ENCODE measurements at regions of chr2 and their contacts with region 1.

Region 1: GRCh38 chr2:216539714-216540241 is 41.1 kb downstream of the RPL37A start:
- DNase-seq: peak; percentile 75
- H3K4me3 ChIP-seq: no peak overlapping the region
- H3K27ac ChIP-seq: peak overlapping the region in 3 of 4 donors; percentile 15 to 34 (median 22)
- H3K4me1 ChIP-seq: peaks cover 8 to 20% (median 16%) of the 10 kb centered on the region in 4 donors
- H3K27me3 ChIP-seq: no peaks in the 10 kb centered on the region
- CTCF ChIP-seq: no peak
- EP300 ChIP-seq: no peak
- POLR2A ChIP-seq: no peak

Region 2: DNA sequence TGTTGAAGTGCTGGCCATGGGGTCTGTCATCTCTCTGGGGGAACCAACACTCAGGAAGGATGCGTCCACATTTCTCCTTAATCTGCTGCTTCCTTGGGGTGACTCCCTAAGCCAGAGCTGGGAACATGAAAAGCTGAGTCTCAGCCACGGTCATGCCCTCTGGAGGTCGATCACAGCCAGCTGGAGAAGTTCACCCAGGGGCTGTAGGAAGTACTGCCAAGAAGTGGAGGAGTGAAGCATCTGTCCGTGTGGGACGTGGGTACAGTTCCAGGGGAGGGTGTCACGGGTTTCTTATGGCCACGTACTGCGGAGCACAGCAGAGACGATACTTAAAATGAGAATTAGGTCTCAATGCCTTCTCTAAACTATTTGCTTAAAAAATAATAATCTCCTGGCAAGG is 51.0 kb after region 1 on chr2:
- in situ Hi-C with region 1: no loop called
- intact Hi-C with region 1: loop called (anchors 1 kb)
- DNase-seq: no peak
- H3K4me3 ChIP-seq: no peak overlapping the region
- H3K27ac ChIP-seq: no peak overlapping the region
- H3K4me1 ChIP-seq: peaks cover 0 to 13% (median 3%) of the 10 kb centered on the region in 4 donors
- H3K27me3 ChIP-seq: peaks cover 3% of the 10 kb centered on the region
- CTCF ChIP-seq: no peak
- EP300 ChIP-seq: no peak
- POLR2A ChIP-seq: no peak